ENCODE measurements at regions of chr4 and their contacts with region 1.

Region 1: GRCh38 chr4:6269616-6270511 is at the start of gene WFS1:
- DNase-seq: peak; percentile 98
- ATAC-seq: peak; percentile 100
- H3K4me3 Mint-ChIP-seq: peak within 1 kb of the TSS; percentile 71
- H3K27ac Mint-ChIP-seq: no peak within 1 kb of the TSS
- H3K4me1 Mint-ChIP-seq: peaks cover 16% of the 10 kb centered on the region
- H3K27me3 Mint-ChIP-seq: peaks cover 7% of the 10 kb centered on the region
- total RNA-seq, gene WFS1: 3.4 to 4.8 TPM

Region 2: DNA sequence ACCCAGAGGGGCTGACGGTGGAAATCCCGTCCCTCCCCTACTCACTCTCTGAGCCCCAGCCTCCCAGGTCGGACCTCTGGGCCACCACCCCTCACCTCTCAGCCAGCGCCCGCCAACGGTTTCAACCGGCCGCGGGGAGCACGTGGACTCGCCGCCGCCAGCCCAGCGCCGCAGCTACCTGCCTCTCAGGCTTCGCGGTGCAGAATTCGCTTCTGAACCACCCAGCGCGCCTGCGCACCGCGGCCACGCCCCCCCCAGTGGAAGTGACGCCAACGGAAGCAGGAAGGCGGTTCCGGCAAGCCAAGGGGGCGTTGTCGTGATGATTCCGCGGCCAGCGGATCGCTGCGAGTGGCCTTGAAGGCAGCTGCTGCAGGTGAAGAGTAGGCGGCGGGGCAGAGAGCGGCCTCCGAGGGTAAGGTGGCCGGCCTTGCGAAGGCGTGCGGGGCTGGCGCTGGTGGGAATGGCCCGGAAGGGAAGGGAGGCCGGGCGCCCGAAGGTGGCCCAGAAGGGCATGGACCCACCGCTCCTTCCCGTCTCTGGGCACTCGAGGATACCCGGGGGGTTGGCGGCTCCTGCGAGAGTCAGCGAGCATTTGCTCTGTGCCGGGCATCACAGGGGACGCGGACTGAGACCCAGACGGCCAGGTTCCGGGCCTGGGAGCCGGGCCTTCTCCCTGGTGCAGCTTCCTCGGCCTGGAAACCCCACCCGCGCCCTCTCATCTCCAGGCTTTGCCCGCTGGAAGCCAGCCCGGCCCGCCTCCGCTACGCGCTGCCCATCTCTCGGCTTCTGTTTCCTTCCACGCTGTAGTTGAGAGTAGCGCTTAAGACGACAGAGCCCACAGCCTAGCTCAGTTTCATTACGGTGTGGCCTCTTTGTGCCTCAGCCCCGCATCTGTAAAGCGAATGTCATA is 1979.7 kb before region 1 on chr4 and contains the starts of genes LYAR and ZBTB49:
- CTCF ChIA-PET with region 1: no interaction called
- POLR2A ChIA-PET with region 1: no interaction called
- intact Hi-C with region 1: loop called in 1 of 2 experiments (anchors 5 kb)
- DNase-seq: peak; percentile 98
- ATAC-seq: peak; percentile 95
- H3K4me3 Mint-ChIP-seq: peak within 1 kb of the TSS; percentile 93
- H3K27ac Mint-ChIP-seq: peak within 1 kb of the TSS; percentile 77
- H3K4me1 Mint-ChIP-seq: peaks cover 35% of the 10 kb centered on the region
- H3K27me3 Mint-ChIP-seq: no peaks in the 10 kb centered on the region
- total RNA-seq, gene LYAR: 65.6 to 74.3 TPM
- total RNA-seq, gene ZBTB49: 3.3 to 3.8 TPM

Region 3: GRCh38 chr4:6157926-6158325 is 111.9 kb before region 1 on chr4:
- CTCF ChIA-PET with region 1: no interaction called
- POLR2A ChIA-PET with region 1: no interaction called
- intact Hi-C with region 1: no loop called
- DNase-seq: no peak
- ATAC-seq: no peak
- H3K4me3 Mint-ChIP-seq: no peak overlapping the region
- H3K27ac Mint-ChIP-seq: no peak overlapping the region
- H3K4me1 Mint-ChIP-seq: peaks cover 4% of the 10 kb centered on the region
- H3K27me3 Mint-ChIP-seq: peaks cover 2% of the 10 kb centered on the region

Region 4: GRCh38 chr4:6200011-6200921 is 69.6 kb before region 1 on chr4 and contains the start of gene JAKMIP1:
- CTCF ChIA-PET with region 1: no interaction called
- POLR2A ChIA-PET with region 1: interaction called, 3 read pairs
- intact Hi-C with region 1: loop called in 1 of 2 experiments (anchors 1 kb)
- DNase-seq: peak; percentile 92
- ATAC-seq: peak; percentile 83
- H3K4me3 Mint-ChIP-seq: peak within 1 kb of the TSS; percentile 68
- H3K27ac Mint-ChIP-seq: no peak within 1 kb of the TSS
- H3K4me1 Mint-ChIP-seq: peaks cover 26% of the 10 kb centered on the region
- H3K27me3 Mint-ChIP-seq: peaks cover 42% of the 10 kb centered on the region
- total RNA-seq, gene JAKMIP1: 3.1 to 3.9 TPM

Region 5: GRCh38 chr4:6327041-6327917 is 57.4 kb after region 1 on chr4:
- CTCF ChIA-PET with region 1: interaction called, 3 read pairs
- POLR2A ChIA-PET with region 1: no interaction called
- intact Hi-C with region 1: loop called in 1 of 2 experiments (anchors 5 kb)
- DNase-seq: peak; percentile 88
- ATAC-seq: peak; percentile 90
- H3K4me3 Mint-ChIP-seq: no peak overlapping the region
- H3K27ac Mint-ChIP-seq: no peak overlapping the region
- H3K4me1 Mint-ChIP-seq: no peaks in the 10 kb centered on the region
- H3K27me3 Mint-ChIP-seq: peaks cover 14% of the 10 kb centered on the region

Region 6: GRCh38 chr4:6640292-6641163 is 370.7 kb after region 1 on chr4 and contains the start of gene MRFAP1:
- CTCF ChIA-PET with region 1: no interaction called
- POLR2A ChIA-PET with region 1: no interaction called
- intact Hi-C with region 1: loop called in 1 of 2 experiments (anchors 1 kb)
- DNase-seq: peak; percentile 97
- ATAC-seq: peak; percentile 86
- H3K4me3 Mint-ChIP-seq: peak within 1 kb of the TSS; percentile 96
- H3K27ac Mint-ChIP-seq: peak within 1 kb of the TSS; percentile 100
- H3K4me1 Mint-ChIP-seq: peaks cover 27% of the 10 kb centered on the region
- H3K27me3 Mint-ChIP-seq: no peaks in the 10 kb centered on the region
- total RNA-seq, gene MRFAP1: 66.8 to 122 TPM

Measured in activated CD4-positive, alpha-beta T cell treated with anti-CD3 and anti-CD28 coated beads for 36 hours (primary cell).